ENCODE measurements at regions of chr13 and their contacts with region 1.

Region 1: DNA sequence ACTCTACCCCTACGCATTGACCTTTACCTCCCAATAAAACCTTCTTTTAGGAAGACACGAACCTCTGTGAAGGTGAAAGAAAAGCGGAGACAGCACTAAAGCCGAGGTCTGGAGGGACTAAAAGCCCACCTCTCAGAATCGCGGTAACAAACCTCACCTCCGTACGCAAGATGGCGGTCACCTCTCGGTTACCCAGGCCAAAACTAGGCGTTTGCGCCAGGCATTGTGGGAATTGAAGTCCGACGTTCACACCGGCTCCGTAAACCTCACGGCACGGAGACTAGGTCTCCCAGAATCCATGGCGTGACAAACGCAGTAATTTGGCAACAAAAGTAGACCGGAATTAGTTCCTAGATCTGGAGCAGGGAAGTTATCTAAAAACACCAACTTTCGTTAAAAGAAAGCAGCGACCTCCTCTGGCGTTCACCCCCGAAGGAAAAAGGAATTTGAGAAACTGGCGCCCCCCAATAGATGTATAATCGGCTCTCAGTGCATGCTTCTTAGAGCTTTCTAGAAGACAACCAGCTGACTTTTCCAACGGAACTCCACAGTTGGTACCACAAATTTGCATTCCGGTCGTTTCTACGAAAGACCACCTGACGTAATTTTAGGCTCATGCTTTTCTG is at the start of gene N4BP2L2:
- DNase-seq: peak; percentile 95
- H3K4me3 Mint-ChIP-seq: peak within 1 kb of the TSS; percentile 99
- H3K27ac Mint-ChIP-seq: peak within 1 kb of the TSS; percentile 100
- H3K4me1 Mint-ChIP-seq: peaks cover 41% of the 10 kb centered on the region
- H3K27me3 Mint-ChIP-seq: peaks cover 2% of the 10 kb centered on the region
- total RNA-seq, gene N4BP2L2: 86.6 to 102 TPM

Region 2: DNA sequence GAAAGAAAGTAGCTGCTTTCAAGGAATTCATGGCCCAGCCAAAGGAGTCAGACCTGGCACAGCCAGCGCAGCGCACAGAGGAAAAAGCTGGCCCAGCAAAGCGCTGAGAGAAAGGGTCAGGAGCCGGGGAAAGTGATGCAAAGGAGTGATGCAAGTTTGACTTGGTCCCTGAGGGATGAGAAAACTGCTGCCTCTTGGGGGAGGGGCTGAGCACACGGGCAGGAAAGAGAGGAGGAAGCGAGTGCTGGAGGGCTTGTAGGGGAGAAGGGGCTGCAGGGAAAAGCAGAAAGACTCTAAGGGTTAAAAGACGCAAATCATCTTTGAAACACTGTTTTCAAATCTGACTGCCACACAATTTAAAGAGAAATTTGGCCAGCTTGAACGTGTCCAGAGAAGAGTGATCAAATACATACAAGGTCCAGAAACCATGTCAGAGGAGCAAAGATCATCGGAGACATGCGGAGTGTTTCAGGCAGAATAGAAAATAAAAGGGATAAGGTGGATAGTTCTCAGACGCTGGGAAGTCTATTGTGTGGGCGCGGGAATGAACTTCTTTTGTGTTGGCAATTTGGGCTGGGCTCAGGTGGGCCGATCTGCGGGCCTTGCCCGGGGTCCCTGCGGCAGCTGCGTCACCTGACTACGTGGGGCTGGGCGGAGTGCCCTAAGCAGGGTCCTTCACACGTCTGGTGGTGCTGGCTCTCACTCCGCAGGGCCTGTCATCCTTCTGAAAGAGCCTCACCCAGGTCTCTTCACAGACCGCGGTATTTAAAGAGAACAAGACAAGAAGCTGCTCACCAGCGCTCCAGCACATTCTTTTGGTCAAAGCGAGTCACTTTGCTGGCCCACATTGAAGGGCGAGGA is 128.9 kb before region 1 on chr13:
- CTCF ChIA-PET with region 1: no interaction called
- POLR2A ChIA-PET with region 1: no interaction called
- intact Hi-C with region 1: loop called (anchors 1 kb)
- DNase-seq: no peak
- H3K4me3 Mint-ChIP-seq: no peak overlapping the region
- H3K27ac Mint-ChIP-seq: no peak overlapping the region
- H3K4me1 Mint-ChIP-seq: peaks cover 23% of the 10 kb centered on the region
- H3K27me3 Mint-ChIP-seq: no peaks in the 10 kb centered on the region

Region 3: DNA sequence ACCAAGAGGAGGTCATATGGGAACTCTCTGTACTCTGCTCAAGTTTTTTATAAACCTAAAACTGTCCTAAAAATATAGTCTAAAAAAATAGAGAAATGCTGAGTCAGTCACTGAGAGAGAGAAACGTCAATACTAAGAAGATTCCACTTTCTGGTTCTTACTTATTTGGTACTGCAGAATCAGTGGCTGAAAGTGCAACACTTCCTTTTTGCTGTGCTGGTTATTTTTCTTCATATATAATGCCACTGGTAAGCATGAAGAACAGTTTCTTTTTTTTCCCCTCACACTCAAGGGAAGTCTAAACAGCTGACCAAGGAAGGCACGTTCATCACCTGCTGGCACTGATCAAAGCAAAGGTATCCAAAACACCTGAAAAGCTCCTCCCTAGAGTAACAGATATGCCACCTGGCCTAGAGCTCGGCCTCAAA is 66.5 kb before region 1 on chr13:
- CTCF ChIA-PET with region 1: interaction called, 6 read pairs
- POLR2A ChIA-PET with region 1: no interaction called
- intact Hi-C with region 1: loop called (anchors 1 kb)
- DNase-seq: no peak
- H3K4me3 Mint-ChIP-seq: no peak overlapping the region
- H3K27ac Mint-ChIP-seq: peak overlapping the region; percentile 84
- H3K4me1 Mint-ChIP-seq: peaks cover 18% of the 10 kb centered on the region
- H3K27me3 Mint-ChIP-seq: no peaks in the 10 kb centered on the region

Region 4: DNA sequence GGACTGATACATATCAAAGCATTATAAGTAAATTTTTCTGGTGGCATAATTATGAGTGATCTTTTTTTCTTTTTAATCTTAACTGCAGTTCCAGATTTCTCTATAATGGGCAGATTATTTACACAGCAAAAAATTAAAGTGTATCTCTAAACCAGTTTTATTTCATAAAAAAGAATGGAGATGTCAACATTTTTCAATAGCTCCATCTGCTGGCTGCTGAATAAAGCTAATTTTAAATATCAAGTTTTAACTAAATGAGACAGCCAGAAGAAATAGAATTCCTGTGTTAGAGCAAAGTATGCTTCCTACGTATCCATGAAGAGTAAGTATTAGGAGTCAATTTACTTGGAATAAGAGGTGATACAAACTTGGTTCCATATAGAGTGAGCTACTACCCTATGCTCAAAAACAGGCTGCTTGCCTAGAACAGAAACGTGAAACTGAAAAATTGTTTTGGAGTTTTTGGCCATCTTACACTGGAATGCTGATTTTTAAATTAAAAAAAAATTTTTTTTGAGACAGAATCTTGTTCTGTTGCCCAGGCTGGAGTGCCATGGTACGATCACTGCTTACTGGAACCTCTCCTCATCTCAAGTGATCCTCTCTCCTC is 42.5 kb after region 1 on chr13:
- CTCF ChIA-PET with region 1: interaction called, 10 read pairs
- POLR2A ChIA-PET with region 1: interaction called, 7 read pairs
- intact Hi-C with region 1: loop called (anchors 1 kb)
- DNase-seq: no peak
- H3K4me3 Mint-ChIP-seq: no peak overlapping the region
- H3K27ac Mint-ChIP-seq: no peak overlapping the region
- H3K4me1 Mint-ChIP-seq: peaks cover 8% of the 10 kb centered on the region
- H3K27me3 Mint-ChIP-seq: no peaks in the 10 kb centered on the region

Region 5: GRCh38 chr13:32676242-32676641 is 137.5 kb after region 1 on chr13:
- CTCF ChIA-PET with region 1: no interaction called
- POLR2A ChIA-PET with region 1: no interaction called
- intact Hi-C with region 1: no loop called
- DNase-seq: no peak
- H3K4me3 Mint-ChIP-seq: no peak overlapping the region
- H3K27ac Mint-ChIP-seq: no peak overlapping the region
- H3K4me1 Mint-ChIP-seq: no peaks in the 10 kb centered on the region
- H3K27me3 Mint-ChIP-seq: no peaks in the 10 kb centered on the region

Region 6: DNA sequence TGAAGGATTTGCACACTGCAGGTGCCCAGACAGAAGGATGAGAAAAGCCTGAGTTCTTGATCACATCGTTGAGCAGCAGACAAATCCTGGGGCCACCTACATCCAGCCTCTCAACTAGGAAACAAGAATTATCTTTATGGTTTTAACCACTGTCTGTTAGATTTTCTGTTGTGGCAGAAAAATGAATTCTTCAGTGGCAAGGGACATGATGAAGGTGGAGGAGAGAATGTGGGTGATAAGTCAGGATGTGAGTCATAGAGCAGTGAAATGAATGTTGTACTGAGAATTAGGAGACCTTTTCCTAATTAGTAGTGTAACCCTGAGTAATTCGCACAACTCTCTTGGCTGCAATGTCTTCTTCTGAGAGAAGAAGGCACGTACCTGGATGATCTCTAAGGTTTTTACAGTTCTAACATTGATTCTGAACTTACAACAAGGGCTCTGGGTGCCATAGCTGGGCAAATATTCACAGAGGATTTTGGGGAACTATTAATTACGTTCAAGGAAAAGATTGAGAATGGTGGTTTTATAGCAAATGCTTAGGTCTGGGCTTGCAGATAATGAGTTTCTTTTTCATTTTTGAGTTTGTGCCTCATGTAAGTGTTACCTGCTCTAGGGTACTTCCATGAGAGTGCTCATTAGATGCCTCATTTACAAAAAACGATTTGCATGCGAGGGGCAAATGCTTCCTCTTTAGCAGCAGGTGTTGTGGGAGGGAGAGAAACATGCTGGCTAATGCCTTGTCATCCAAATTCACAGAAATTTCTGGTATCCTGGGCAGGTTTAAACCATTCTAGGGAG is 366.5 kb after region 1 on chr13:
- CTCF ChIA-PET with region 1: no interaction called
- POLR2A ChIA-PET with region 1: no interaction called
- intact Hi-C with region 1: loop called (anchors 1 kb)
- DNase-seq: peak; percentile 40
- H3K4me3 Mint-ChIP-seq: peak overlapping the region; percentile 44
- H3K27ac Mint-ChIP-seq: peak overlapping the region; percentile 87
- H3K4me1 Mint-ChIP-seq: peaks cover 19% of the 10 kb centered on the region
- H3K27me3 Mint-ChIP-seq: peaks cover 33% of the 10 kb centered on the region

Region 7: GRCh38 chr13:33328701-33329100 is 790.0 kb after region 1 on chr13:
- CTCF ChIA-PET with region 1: no interaction called
- POLR2A ChIA-PET with region 1: no interaction called
- intact Hi-C with region 1: no loop called
- DNase-seq: no peak
- H3K4me3 Mint-ChIP-seq: no peak overlapping the region
- H3K27ac Mint-ChIP-seq: no peak overlapping the region
- H3K4me1 Mint-ChIP-seq: no peaks in the 10 kb centered on the region
- H3K27me3 Mint-ChIP-seq: peaks cover 4% of the 10 kb centered on the region

Region 8: DNA sequence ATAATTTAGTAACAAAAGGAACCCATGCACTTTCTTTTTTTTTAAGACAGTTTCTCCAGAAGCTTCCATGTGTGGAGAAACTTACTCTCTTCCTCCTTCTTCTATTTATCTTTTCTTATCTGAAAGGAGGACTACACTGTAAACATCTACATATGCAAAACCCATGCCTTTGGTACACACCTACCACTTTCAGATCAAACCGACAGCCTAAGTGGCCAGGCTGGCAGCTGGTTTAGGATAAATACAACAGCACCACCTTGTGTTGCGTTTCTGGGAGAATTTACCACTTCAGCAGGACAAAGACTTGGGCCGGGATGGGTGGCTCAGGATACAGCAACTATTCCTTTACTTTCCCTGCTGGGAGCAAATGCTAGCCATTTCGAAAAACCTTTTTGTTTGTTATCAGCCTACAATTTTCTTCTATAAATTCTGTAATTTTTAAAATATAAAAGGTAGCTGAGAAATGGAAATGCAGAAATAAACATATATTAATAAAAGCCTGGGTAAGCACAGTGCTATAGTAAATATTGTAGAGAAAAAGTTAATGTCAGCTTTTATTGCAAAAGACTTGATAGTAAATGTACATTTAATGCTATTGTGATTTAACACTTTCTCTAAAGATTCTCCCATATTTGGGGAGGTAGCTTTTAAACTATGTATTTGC is 1185.2 kb after region 1 on chr13:
- CTCF ChIA-PET with region 1: no interaction called
- POLR2A ChIA-PET with region 1: no interaction called
- intact Hi-C with region 1: loop called (anchors 5 kb)
- DNase-seq: peak; percentile 78
- H3K4me3 Mint-ChIP-seq: no peak overlapping the region
- H3K27ac Mint-ChIP-seq: peak overlapping the region; percentile 57
- H3K4me1 Mint-ChIP-seq: peaks cover 37% of the 10 kb centered on the region
- H3K27me3 Mint-ChIP-seq: no peaks in the 10 kb centered on the region